Left colon (tissue), 2 donors: ENCODE measurements at regions of chr2 and their contacts with region 1.

Region 1: DNA sequence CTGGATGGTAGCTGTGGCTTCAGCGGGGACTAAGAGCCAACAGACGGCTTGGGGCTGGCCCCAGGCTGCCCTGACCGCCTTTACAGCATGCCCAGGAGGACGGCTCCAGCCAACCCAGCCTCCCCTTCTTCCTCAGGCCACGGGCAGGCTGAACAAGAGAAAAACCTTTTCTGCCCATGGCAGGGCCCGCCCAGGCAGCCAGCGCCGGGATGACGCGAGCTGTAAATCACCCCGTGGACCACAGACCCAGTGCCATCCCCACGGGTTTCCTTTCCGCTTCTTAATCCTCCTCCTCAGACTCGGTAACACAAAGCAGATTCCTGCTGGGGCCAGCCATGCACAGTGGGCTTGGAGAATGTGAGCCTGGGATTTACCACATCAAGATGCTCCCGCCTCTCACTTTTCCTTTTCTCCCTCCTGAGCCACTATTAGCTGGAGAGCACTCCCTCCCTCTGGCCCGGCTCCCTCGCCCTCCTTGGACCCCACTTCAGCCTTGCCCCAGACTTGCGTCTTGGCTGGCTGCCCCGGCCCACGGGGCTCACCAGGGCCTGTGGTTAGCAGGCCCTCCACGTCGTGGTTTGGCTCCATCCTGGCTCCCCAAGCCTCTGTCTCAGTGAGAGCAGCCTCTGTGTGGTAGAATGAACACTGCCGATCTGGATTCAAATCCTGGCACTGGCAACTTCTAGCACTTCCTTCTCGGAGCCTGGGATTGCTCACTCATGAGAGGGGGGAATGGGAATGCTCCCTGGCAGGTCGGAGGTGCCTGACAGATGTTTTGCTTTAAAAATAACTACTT is 31.4 kb downstream of the ATOH8 start:
- DNase-seq: no peak
- ATAC-seq: no peak

Region 2: GRCh38 chr2:85549826-85550225 is 235.4 kb before region 1 on chr2:
- intact Hi-C with region 1: no loop called
- DNase-seq: no peak
- ATAC-seq: no peak

Region 3: DNA sequence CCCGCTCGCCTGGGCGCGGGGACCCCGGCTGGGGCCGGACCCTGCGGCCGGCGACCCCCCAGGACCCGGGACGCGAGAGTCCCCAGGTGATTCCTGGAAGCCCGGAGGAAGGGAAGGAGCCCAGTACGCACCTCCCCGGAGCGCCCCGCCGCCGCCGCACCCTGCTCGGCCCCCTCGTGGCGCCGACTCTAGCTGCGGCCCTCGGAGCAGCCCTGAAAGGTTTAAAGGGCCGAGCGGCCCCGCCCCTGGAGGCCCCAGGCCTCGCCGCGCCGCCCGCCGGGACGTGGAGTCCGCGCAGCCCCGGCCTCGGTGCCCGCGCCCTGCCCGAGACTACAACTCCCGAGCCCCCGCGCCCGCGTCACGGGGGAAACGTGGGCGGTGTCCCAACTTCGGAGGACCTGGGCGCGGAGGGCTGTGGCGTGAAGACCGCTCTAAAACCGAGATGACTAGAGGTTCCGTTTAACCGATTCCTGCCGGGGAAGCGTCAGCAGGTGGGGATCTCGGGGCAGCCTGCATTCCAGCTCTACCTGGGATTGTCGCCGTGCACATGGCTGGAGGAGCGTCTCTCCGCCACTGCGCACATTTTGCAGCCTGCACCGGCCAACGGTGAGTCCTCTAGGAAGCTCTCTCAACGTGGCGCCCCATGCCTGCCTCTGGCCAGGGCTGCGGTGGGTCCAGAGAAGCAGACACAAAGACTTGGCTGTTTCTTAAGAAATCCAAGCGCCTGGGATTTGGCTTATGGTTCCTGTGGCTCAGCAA is 182.6 kb before region 1 on chr2 and contains the start of gene TMEM150A:
- intact Hi-C with region 1: no loop called
- DNase-seq: peak; percentile 93 to 96
- ATAC-seq: peak; percentile 91
- total RNA-seq, gene TMEM150A: 10.0 to 10.8 TPM

Region 4: GRCh38 chr2:85737481-85737880 is 47.7 kb before region 1 on chr2:
- intact Hi-C with region 1: loop called in 1 of 2 experiments (anchors 10 kb)
- DNase-seq: peak; percentile 34 to 62
- ATAC-seq: no peak

Region 5: DNA sequence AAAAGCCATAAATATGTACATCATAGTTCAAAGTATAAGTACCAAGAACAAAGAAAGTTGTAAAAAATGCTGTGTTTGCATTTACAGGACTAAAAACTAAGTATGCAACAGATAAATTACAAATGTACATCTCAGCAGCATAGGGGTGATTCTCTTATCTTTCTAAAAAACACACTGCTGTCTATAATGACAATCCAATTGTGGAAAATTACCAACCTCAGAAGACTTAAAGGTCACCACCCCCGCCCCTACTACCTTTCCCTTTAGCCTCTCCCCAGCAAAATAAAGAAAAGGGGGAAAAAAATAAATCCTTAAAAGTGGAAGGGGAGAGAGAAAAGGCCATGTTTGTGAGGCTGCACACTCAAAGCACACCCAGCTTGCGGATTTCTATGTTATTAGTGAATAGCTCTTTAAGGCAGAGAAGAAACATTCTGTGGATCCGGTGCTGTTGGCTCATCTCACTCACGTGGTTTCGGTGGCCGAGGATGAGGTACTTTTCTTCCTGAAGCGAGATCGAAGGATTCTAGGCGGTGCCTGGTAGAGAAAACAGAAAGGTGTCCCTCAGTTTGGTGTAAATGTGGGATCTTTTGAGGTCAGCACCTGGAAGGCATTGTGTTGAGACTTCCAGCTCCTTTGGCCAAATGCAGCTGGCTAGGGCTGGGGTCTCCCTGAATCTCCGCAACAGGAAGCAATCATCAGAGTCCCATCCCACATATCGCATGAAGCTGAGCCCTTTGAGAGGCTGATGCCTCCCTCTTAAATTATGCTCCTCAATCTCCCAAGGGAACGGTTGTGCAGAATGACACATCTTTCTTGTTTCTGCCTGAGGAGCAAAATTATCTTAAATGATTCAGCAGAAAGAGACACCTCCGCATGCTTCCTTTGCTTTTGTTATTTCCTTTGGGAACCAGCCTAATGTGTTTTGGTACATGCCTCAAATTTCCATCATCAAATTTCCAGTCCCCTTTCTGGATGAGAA is 431.6 kb after region 1 on chr2:
- intact Hi-C with region 1: no loop called
- DNase-seq: no peak
- ATAC-seq: no peak